OCI-LY7 (cell line): ENCODE measurements at regions of chr6 and their contacts with region 1.

Region 1: GRCh38 chr6:139490482-139490881 is 116.0 kb upstream of the CITED2 start:
- DNase-seq: peak; percentile 39
- H3K4me3 ChIP-seq: no peak overlapping the region
- H3K27ac ChIP-seq: no peak overlapping the region
- H3K4me1 ChIP-seq: peaks cover 6% of the 10 kb centered on the region
- CTCF ChIP-seq: no peak

Region 2: DNA sequence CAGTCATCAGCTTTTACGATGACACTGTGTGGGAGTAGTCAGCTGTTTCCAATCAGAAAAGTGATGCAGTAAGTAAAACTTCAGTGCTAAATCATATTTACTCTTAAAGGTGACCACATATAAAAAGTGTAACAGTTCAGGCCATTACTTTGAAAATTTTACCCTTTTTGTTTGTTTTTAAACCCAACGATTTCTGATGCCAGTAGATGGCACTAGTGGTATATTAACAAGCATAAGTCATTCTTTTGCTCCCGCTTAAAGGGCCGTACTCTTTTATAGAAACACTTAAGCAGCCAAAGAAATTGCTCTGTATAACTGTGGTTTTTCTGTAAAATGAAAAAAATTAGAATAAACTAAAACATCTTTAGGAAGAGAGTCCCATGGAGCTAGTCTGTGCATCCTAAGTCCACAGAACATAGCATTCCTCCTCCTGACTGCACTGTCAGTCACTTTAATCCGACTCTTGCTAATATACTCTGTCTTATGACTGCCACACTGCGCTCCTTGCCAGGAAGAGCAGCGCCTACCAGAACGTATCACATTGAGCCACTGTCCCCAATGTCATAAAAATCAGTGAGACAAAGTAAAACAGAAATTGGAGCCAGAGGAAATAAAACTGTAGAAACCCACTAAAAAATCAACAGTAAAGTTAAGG is 1061.4 kb before region 1 on chr6:
- CTCF ChIA-PET with region 1: no interaction called
- POLR2A ChIA-PET with region 1: no interaction called
- intact Hi-C with region 1: no loop called
- DNase-seq: peak; percentile 73
- H3K4me3 ChIP-seq: no peak overlapping the region
- H3K27ac ChIP-seq: no peak overlapping the region
- H3K4me1 ChIP-seq: no peaks in the 10 kb centered on the region
- CTCF ChIP-seq: peak; percentile 95

Region 3: GRCh38 chr6:139448051-139448649 is 42.3 kb before region 1 on chr6:
- CTCF ChIA-PET with region 1: no interaction called
- POLR2A ChIA-PET with region 1: no interaction called
- intact Hi-C with region 1: loop called (anchors 2 kb)
- DNase-seq: no peak
- H3K4me3 ChIP-seq: no peak overlapping the region
- H3K27ac ChIP-seq: no peak overlapping the region
- H3K4me1 ChIP-seq: no peaks in the 10 kb centered on the region
- CTCF ChIP-seq: no peak